ENCODE measurements at regions of chr1 and their contacts with region 1.

Region 1: GRCh38 chr1:64136752-64137411 is 66.5 kb upstream of the UBE2U start:
- DNase-seq: peak; percentile 47
- CTCF ChIP-seq: peak; percentile 88

Region 2: DNA sequence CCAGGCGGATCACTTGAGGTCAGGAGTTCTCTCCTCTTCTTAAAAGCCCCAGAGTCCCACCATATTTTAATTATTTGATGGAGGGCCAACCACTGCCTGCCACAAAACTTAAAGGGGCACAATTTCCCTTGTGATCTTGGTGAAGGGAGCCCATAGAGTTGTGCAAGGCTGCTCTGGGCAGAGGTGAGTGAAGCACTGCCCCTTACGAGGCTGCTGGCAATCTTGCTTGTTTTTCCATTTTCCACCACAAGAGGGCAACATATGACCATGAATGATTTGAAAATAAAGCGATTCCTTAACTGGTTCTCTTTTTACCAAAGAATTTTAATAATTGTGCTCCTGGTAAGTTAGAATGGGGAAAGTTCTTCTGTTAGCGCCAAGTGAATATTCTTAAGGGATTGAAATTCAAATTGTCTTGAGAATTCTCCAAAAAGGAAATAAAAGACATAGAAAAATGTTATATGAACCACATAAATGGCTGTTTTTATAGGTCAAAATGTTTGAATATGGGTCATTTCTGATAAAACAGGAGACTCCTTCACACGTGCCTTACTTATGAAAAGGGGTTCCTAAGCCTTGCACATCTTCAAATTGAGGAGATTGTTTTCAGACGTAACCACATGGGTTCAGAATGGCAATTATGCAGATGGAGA is 521.0 kb before region 1 on chr1:
- CTCF ChIA-PET with region 1: interaction called, 30 read pairs
- POLR2A ChIA-PET with region 1: no interaction called
- DNase-seq: peak; percentile 65
- CTCF ChIP-seq: peak; percentile 59

Region 3: GRCh38 chr1:63691701-63692425 is 445.0 kb before region 1 on chr1:
- CTCF ChIA-PET with region 1: interaction called, 34 read pairs
- POLR2A ChIA-PET with region 1: no interaction called
- DNase-seq: peak; percentile 60
- CTCF ChIP-seq: peak; percentile 79

Region 4: GRCh38 chr1:64065571-64065970 is 71.3 kb before region 1 on chr1:
- CTCF ChIA-PET with region 1: no interaction called
- POLR2A ChIA-PET with region 1: no interaction called
- DNase-seq: no peak
- CTCF ChIP-seq: no peak

Region 5: GRCh38 chr1:64112281-64112680 is 24.6 kb before region 1 on chr1:
- CTCF ChIA-PET with region 1: interaction called, 28 read pairs
- POLR2A ChIA-PET with region 1: no interaction called
- DNase-seq: no peak
- CTCF ChIP-seq: no peak

Region 6: GRCh38 chr1:64126581-64126980 is 10.3 kb before region 1 on chr1:
- CTCF ChIA-PET with region 1: interaction called, 13 read pairs
- POLR2A ChIA-PET with region 1: no interaction called
- DNase-seq: no peak
- CTCF ChIP-seq: no peak

Region 7: DNA sequence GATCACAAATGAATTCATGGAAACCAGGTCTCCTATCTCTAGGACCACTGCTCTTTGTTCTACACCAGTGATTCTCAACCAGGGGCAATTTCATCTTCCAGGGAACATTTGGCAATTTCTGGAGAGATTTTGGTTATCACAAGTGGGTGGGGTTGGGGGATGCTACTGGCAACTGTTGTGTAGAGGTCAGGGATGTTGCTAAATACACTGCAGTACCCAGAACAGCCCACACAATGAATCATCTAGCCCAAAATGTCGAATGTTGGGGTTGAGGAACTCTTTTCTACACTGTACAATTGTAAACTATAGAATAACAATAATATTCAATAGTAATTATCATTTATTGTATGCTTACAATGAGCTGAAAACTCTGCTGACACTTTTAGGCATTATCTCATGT is 10.9 kb after region 1 on chr1:
- CTCF ChIA-PET with region 1: interaction called, 49 read pairs
- POLR2A ChIA-PET with region 1: no interaction called
- DNase-seq: no peak
- CTCF ChIP-seq: no peak

Region 8: GRCh38 chr1:64184003-64184440 is 47.1 kb after region 1 on chr1:
- CTCF ChIA-PET with region 1: interaction called, 16 read pairs
- POLR2A ChIA-PET with region 1: no interaction called
- DNase-seq: no peak
- CTCF ChIP-seq: no peak

Region 9: DNA sequence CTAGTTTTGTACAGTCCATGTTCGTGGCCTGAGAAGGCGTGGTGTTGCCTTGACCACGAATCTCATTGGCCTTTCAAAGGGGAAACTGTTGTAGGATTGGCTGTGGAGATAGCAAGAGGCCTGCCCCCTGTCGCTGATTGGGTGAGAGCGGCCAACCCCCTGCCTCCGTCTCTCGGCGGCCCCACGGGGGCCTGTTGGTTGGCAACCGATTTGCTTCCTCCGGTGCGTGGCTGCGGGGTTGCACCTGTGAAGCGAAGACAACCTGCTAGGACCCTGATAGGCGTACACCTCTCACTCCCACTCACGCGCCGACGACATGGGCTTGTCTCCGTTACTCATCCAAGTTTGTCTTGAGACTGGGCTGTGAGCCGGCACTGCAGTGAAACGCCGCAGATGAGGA is 66.5 kb after region 1 on chr1 and contains the start of gene UBE2U:
- CTCF ChIA-PET with region 1: no interaction called
- POLR2A ChIA-PET with region 1: no interaction called
- DNase-seq: no peak
- CTCF ChIP-seq: no peak

Measured in GM10248 (cell line).